ENCODE measurements at regions of chr11 and their contacts with region 1.

Region 1: DNA sequence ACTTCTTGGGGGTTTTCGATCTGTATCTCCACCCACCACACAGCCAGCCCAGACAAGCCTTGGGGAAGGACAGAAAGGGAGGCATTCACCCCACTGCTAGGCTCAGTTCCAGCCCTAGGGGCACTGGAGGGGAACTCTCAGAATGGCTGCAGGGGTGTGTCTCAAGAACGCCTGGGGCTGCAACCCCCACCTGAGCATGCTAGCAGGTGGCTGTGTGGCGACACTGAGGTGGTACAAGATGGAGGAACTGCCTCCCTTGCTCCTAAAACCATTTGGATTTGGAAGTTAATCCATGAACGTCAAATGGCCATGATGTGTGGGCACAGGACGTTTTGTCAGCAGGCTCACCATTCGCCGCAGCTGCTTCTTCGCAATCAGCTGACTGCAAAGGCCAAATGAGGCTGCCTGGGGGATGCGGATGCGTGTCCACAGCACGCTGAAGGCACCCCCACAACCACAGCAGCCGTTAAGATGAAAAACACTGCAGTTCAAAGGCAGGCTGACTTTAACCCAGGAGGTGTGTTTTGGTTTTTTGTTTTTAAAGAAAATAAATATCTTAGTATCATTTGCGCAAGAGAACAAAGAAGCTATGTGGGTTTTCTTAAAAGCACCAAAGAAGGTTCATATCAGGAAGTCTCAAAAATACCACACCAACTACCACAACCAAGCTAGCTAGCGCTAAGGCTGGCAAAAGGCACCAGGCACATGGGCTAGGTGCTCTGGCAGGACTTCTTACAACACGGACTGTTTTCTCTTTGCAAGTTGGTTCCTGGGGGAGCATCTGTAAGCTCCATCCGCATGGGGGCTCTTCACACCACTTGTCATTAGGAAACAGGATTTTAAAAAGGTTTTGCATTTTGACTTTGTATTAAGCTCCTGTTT is 22.2 kb upstream of the NAP1L4 start:
- DNase-seq: peak; percentile 61 to 94 (median 85)
- ATAC-seq: peak; percentile 84
- H3K4me3 ChIP-seq: peak overlapping the region; percentile 17 to 27
- H3K4me3 Mint-ChIP-seq: peak overlapping the region; percentile 57
- H3K27ac ChIP-seq: peak overlapping the region; percentile 46 to 62
- H3K27ac Mint-ChIP-seq: peak overlapping the region; percentile 92
- H3K4me1 ChIP-seq: peaks cover 86% of the 10 kb centered on the region
- H3K4me1 Mint-ChIP-seq: peaks cover 74% of the 10 kb centered on the region
- H3K27me3 ChIP-seq: no peaks in the 10 kb centered on the region
- H3K27me3 Mint-ChIP-seq: no peaks in the 10 kb centered on the region
- CTCF ChIP-seq: no peak

Region 2: DNA sequence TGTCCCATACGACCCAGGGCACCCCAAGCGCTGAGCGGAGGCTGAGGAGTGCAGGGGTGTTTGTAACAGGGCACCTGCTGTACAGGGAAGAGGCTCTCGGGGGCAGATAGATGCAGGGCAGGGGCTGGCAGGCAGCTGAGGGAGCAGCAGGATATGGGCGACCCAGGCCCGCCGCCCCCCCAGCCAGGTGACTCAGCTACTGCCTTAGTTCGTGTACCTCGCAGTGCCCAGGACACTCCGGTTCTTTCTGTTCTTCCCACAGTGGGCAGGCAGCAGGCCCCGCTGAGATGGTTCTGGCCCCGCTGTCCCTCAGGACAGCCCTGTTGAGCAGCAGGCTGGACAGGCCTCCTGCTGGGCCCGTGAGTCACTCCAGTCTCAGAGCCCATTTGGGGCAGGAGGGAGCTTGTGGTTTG is 101.3 kb before region 1 on chr11:
- CTCF ChIA-PET with region 1: no interaction called
- POLR2A ChIA-PET with region 1: no interaction called
- intact Hi-C with region 1: no loop called
- DNase-seq: no peak
- ATAC-seq: peak; percentile 32
- H3K4me3 ChIP-seq: no peak overlapping the region
- H3K4me3 Mint-ChIP-seq: no peak overlapping the region
- H3K27ac ChIP-seq: no peak overlapping the region
- H3K27ac Mint-ChIP-seq: no peak overlapping the region
- H3K4me1 ChIP-seq: peaks cover 23% of the 10 kb centered on the region
- H3K4me1 Mint-ChIP-seq: peaks cover 13% of the 10 kb centered on the region
- H3K27me3 ChIP-seq: no peaks in the 10 kb centered on the region
- H3K27me3 Mint-ChIP-seq: no peaks in the 10 kb centered on the region
- CTCF ChIP-seq: no peak

Region 3: DNA sequence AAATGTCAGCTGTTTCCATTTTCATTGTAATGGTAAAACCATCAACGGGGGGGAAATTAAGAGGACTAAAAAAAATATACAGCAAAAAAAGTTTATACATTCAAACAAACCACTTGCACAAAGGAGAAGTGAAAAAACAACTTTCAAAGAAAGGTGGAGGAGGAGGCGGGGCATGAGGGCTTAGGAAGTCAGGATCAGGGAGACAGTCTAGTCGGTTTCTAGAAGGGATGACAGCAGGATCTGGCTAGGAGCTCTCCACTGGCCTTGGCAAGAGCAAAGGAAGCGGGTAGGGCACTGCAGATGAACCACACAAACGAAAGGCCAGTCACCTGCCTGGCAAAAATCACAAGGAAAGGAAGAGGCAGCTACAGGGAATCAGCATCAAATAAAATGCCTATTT is 53.2 kb before region 1 on chr11:
- CTCF ChIA-PET with region 1: interaction called, 11 read pairs
- POLR2A ChIA-PET with region 1: interaction called, 7 read pairs
- intact Hi-C with region 1: no loop called
- DNase-seq: no peak
- ATAC-seq: no peak
- H3K4me3 ChIP-seq: no peak overlapping the region
- H3K4me3 Mint-ChIP-seq: no peak overlapping the region
- H3K27ac ChIP-seq: no peak overlapping the region
- H3K27ac Mint-ChIP-seq: peak overlapping the region; percentile 69
- H3K4me1 ChIP-seq: no peaks in the 10 kb centered on the region
- H3K4me1 Mint-ChIP-seq: peaks cover 32% of the 10 kb centered on the region
- H3K27me3 ChIP-seq: no peaks in the 10 kb centered on the region
- H3K27me3 Mint-ChIP-seq: no peaks in the 10 kb centered on the region
- CTCF ChIP-seq: no peak

Region 4: DNA sequence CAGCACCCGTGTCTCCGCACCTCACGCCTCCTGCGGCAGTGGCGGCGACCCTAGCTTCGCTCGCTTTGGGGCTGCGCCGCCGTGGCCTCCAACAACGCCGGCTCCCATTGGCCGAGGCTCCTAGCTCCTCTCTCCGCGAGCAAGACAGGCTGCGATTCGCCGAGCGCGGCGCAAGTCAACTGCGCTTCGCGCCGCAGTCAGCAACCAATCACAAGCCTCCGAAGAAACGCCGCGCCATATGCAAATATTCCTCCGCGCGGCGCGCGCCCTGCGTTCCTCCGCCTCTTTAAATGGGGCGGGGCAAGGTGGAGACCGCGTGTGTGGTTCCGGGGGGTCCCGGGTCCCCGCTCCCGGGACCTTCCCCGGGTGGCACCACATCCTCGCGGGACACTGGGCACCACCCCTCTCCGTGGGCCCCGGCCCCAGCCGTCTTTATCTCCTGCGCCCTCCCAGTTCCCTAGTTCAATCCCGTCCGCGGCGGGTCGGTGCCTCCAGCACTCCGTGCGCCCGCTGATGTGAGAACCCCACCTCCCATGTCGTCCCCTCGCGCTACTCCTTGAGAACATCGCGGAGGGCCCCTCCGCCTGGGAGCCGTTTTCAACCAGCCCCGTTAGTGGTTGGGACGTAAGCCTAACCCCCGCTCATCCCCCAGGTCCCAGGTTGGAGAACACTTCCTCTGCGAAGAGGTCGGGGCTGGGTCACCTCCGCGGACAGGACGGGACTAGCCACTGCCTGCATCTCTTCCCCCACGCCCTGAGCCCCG is 21.9 kb before region 1 on chr11 and contains the start of gene NAP1L4:
- CTCF ChIA-PET with region 1: interaction called, 47 read pairs
- POLR2A ChIA-PET with region 1: interaction called, 132 read pairs
- intact Hi-C with region 1: loop called (anchors 1 kb)
- DNase-seq: peak; percentile 87 to 99 (median 97)
- ATAC-seq: peak; percentile 81
- H3K4me3 ChIP-seq: peak within 1 kb of the TSS; percentile 80 to 85
- H3K4me3 Mint-ChIP-seq: peak within 1 kb of the TSS; percentile 97
- H3K27ac ChIP-seq: peak within 1 kb of the TSS; percentile 74 to 75
- H3K27ac Mint-ChIP-seq: peak within 1 kb of the TSS; percentile 98
- H3K4me1 ChIP-seq: peaks cover 19% of the 10 kb centered on the region
- H3K4me1 Mint-ChIP-seq: peaks cover 27% of the 10 kb centered on the region
- H3K27me3 ChIP-seq: no peaks in the 10 kb centered on the region
- H3K27me3 Mint-ChIP-seq: no peaks in the 10 kb centered on the region
- CTCF ChIP-seq: no peak
- total RNA-seq, gene NAP1L4: 276 to 290 TPM

Region 5: DNA sequence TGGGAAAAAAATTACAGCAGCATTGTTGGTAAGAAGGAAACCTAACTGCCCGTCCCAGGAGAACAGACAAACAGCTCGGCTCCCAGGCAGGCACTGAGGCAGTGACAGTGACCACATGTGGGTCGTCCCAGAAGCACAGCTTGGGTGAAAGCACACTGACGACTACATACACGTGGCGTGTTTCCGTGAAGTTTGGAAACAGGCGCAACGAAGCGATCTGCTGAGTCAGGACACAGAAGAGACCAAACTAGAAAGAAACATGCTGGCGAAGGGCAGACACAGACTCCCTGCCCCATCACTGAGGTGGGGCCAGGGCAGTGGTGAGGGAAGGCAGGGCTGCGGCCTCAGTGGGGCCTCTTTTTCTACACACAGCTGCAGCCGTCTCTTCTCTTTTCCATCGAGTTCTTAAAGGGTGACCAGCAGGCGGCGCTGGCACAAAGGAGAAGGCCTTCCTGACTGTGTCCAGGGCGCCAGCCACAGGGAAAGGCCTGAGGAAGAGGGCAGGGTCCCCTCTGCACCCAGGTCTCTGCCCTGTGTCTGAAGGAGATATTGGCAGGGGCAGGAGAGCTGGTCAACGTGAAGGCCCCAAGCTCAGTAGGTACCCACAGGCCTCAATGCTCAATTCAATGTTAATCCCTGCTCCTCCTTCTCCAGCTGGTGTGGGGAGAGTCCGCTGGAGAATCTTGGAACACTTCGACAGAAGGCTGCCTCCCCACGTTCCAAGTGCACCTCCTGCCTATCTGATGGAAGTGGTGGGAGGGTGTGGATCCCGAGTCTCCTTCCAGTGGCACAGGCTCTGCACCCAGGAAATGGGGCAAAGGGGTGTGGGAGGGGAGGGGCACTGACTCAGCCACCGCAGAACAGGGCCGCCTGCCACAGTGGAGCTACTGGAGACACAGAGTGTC is 23.0 kb after region 1 on chr11:
- CTCF ChIA-PET with region 1: interaction called, 14 read pairs
- POLR2A ChIA-PET with region 1: interaction called, 4 read pairs
- intact Hi-C with region 1: no loop called
- DNase-seq: peak in 8 of 9 experiments; percentile 18 to 66 (median 48)
- ATAC-seq: peak; percentile 84
- H3K4me3 ChIP-seq: no peak overlapping the region
- H3K4me3 Mint-ChIP-seq: no peak overlapping the region
- H3K27ac ChIP-seq: no peak overlapping the region
- H3K27ac Mint-ChIP-seq: no peak overlapping the region
- H3K4me1 ChIP-seq: peaks cover 6% of the 10 kb centered on the region
- H3K4me1 Mint-ChIP-seq: peaks cover 12% of the 10 kb centered on the region
- H3K27me3 ChIP-seq: no peaks in the 10 kb centered on the region
- H3K27me3 Mint-ChIP-seq: no peaks in the 10 kb centered on the region
- CTCF ChIP-seq: peak; percentile 30

Region 6: DNA sequence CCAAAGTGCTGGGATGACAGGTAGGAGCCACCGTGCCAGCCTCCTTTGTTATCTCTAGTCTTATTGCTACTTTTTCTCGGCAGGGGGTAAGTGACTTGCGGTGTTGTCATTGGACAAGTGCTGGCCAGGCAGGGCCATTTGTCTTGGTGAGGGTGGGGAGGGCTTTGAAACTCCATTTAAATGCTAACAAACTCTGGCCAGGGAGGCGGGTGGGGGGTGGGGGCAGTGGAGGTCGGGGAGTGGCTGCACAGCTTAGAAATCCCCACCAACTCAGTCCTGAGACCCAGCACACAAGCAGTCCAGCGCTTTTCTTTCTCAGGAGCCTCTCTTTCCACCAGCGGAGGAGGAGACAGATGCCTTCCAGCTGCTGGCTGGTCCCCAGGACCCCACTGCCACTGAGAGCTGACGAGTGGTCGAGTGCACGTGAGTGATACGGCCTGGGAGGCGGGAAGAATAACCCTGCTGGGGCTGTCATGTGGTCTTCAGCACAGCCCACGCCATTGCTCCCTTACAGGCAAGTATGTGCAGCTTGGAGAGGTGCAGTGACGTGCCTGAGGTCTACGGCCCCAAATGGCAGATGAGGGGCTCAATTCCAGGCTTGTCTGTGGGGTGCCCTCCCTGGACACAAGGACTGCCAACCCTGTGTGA is 175.0 kb after region 1 on chr11:
- CTCF ChIA-PET with region 1: no interaction called
- POLR2A ChIA-PET with region 1: no interaction called
- intact Hi-C with region 1: no loop called
- DNase-seq: no peak
- ATAC-seq: no peak
- H3K4me3 ChIP-seq: no peak overlapping the region
- H3K4me3 Mint-ChIP-seq: no peak overlapping the region
- H3K27ac ChIP-seq: no peak overlapping the region
- H3K27ac Mint-ChIP-seq: no peak overlapping the region
- H3K4me1 ChIP-seq: no peaks in the 10 kb centered on the region
- H3K4me1 Mint-ChIP-seq: no peaks in the 10 kb centered on the region
- H3K27me3 ChIP-seq: no peaks in the 10 kb centered on the region
- H3K27me3 Mint-ChIP-seq: no peaks in the 10 kb centered on the region
- CTCF ChIP-seq: no peak

Measured in CD8-positive, alpha-beta T cell (primary cell).